ENCODE measurements at regions of chr19 and their contacts with region 1.

Region 1: GRCh38 chr19:47514869-47515588 is at the start of gene NAPA:
- DNase-seq: peak; percentile 100
- ATAC-seq: peak; percentile 98
- H3K4me3 ChIP-seq: peak within 1 kb of the TSS; percentile 47
- H3K27ac ChIP-seq: peak within 1 kb of the TSS; percentile 78
- H3K4me1 ChIP-seq: peaks cover 30% of the 10 kb centered on the region
- H3K27me3 ChIP-seq: no peaks in the 10 kb centered on the region
- total RNA-seq, gene NAPA: 91.7 to 111 (median 105) TPM

Region 2: DNA sequence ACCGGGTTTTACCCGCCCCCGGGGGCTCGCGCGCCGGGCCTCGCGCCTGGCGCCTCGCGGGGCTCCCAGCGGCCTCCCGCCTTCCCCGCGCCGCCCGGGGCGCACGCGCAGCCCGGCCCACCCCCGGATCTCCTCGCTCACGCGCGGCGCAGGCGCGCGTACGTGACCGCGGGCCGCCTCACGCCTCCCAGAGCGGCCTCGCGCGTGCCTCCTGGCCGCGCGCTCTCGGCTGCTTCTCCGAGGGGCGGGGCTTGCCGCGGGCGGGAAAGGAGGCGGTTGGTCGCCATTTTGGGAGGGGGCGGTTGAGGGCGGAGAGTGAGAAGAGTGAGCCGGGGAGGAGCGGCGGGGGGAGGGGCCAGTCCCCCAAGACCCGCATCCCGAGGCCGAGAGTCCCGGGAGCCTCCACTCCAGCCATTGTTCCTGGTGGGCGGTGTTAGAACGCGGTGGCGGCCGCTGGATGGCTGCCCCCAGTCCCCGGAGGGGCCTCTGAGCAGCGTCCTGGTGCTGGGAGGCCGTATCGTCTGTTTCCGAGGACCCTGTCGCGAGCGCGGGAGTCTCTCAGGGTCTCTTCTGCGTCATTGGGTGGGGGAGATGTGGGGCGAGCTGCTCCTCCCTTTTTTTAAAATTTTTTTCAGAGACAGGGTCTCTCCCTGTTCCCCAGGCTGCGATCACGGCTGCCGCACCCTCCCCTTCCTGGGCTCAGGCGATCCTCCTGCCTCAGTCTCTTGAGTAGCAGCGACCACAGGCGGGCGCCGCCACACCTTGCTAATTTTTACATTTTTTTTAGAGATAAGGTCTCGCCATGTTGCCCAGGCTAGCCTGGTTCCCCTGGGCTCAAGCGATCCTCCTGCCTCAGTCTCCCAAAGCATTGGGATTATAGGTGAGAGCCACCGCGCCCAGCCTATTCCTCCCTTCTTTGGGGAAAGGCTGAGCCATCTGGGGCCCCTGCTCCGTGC is 58.3 kb after region 1 on chr19 and contains the start of gene ZNF541:
- intact Hi-C with region 1: no loop called
- DNase-seq: peak; percentile 75 to 91 (median 90)
- ATAC-seq: peak; percentile 92
- H3K4me3 ChIP-seq: peak within 1 kb of the TSS; percentile 60
- H3K27ac ChIP-seq: no peak within 1 kb of the TSS
- H3K4me1 ChIP-seq: peaks cover 2% of the 10 kb centered on the region
- H3K27me3 ChIP-seq: no peaks in the 10 kb centered on the region
- total RNA-seq, gene ZNF541: 0.23 TPM in 1 of 4 donors, not detected in the others

Region 3: GRCh38 chr19:47600246-47601179 is 85.5 kb after region 1 on chr19:
- intact Hi-C with region 1: loop called in 2 of 4 experiments (anchors 10 kb)
- DNase-seq: peak; percentile 100
- ATAC-seq: peak; percentile 99
- H3K4me3 ChIP-seq: peak overlapping the region; percentile 81
- H3K27ac ChIP-seq: peak overlapping the region; percentile 97
- H3K4me1 ChIP-seq: peaks cover 2% of the 10 kb centered on the region
- H3K27me3 ChIP-seq: no peaks in the 10 kb centered on the region

Measured in right cardiac atrium (tissue), 5 donors.